ENCODE measurements at regions of chr7 and their contacts with region 1.

Region 1: DNA sequence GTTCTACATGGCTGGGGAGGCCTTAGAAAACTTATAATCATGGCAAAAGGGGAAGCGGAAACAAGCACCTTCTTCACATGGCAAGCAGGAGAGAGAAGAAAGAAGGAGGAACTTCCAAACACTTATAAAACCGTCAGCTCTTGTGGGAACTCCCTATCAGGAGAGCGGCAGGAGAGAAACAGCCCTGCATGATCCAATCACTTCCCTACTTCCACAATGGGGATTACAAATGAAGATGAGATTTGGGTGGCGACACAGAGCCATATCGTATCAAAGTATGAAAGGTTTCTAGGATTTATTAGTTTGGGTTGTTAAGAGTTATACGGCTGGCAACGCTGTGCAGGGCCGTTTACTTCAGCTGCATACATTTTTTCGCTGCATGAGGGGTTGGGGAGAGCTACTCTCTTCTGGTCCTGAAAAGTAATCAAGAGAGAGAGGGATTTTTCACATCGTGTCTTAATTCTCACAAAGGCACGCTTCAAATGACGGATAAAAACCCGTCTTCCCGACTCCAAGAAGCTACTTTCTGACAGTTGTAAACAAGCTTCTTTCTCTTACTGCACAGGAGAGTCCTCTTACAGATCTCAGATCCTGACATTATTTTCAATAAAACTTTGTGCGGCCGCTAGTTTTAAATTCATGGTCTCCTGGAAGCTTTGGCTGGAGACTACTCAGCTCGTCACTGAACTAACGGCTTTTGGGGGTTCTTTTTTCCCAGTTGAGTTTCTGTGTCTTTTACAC is 751 bp upstream of the GTPBP10 start:
- DNase-seq: no peak

Region 2: GRCh38 chr7:90312745-90313144 is 33.0 kb before region 1 on chr7:
- CTCF ChIA-PET with region 1: interaction called, 10 read pairs
- POLR2A ChIA-PET with region 1: no interaction called
- DNase-seq: no peak

Region 3: DNA sequence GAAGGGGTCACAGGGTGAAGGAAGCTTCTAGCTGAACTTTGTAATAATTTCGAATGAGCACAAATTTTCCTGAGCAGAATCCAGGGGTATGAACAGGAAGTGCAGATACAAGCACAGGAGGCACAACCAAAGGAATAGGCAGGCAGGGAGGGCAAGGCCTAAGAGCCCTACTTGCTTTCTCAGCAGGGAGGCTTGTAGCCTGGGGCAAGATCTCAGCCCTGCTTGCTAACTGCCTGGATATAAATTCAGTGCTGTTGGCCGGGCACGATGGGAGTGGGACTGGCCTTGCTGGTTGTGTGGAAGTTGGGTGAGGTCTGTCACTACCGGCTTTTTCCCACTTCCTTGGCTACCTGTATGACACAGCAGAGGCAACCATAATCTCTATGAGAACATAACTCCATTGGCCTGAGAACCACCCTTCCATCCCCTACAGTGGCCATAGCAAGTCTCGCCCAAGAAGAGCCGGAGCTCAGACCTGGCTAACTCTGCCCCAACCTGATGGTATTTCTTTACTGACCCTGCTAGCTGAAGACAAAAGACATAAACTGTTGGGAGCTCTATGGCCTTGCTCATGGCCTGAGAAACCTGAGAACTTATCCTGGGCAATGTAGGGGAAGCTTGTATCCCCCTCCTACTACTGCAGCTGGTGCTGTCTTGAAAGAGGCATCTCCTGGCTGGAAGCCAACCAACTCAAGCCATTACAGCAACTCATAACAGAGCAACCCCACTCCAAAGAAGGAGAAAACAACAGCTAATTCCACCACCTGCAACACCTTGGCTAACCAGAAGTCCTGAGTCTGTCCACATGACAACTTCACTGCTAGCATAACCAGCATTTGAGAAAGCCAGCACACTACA is 85.1 kb after region 1 on chr7:
- CTCF ChIA-PET with region 1: no interaction called
- POLR2A ChIA-PET with region 1: no interaction called
- DNase-seq: no peak